CD4-positive, alpha-beta memory T cell (primary cell): ENCODE measurements at regions of chr1 and their contacts with region 1.

Region 1: GRCh38 chr1:172532700-172533509 is at the start of gene SUCO:
- DNase-seq: peak; percentile 99 to 100 (median 100)
- H3K4me3 ChIP-seq: peak within 1 kb of the TSS; percentile 88 to 97
- H3K4me3 Mint-ChIP-seq: peak within 1 kb of the TSS; percentile 93 to 100 (median 97)
- H3K27ac ChIP-seq: peak within 1 kb of the TSS; percentile 99
- H3K27ac Mint-ChIP-seq: peak within 1 kb of the TSS; percentile 97 to 100 (median 100)
- H3K4me1 ChIP-seq: peaks cover 49% of the 10 kb centered on the region
- H3K4me1 Mint-ChIP-seq: peaks cover 37 to 62% (median 46%) of the 10 kb centered on the region in 4 donors
- H3K27me3 ChIP-seq: no peaks in the 10 kb centered on the region
- H3K27me3 Mint-ChIP-seq: peaks cover 0 to 3% of the 10 kb centered on the region in 2 donors
- total RNA-seq, gene SUCO: 71.6 to 74.4 TPM

Region 2: GRCh38 chr1:171741872-171742576 is 790.9 kb before region 1 on chr1 and contains the start of gene VAMP4:
- CTCF ChIA-PET with region 1: interaction called, 3 read pairs
- POLR2A ChIA-PET with region 1: interaction called, 11 read pairs
- intact Hi-C with region 1: loop called (anchors 1 kb)
- DNase-seq: peak; percentile 85 to 90 (median 89)
- H3K4me3 ChIP-seq: peak within 1 kb of the TSS; percentile 84 to 92
- H3K4me3 Mint-ChIP-seq: peak within 1 kb of the TSS; percentile 97 to 100 (median 100)
- H3K27ac ChIP-seq: peak within 1 kb of the TSS; percentile 96
- H3K27ac Mint-ChIP-seq: peak within 1 kb of the TSS; percentile 98 to 100 (median 99)
- H3K4me1 ChIP-seq: peaks cover 44% of the 10 kb centered on the region
- H3K4me1 Mint-ChIP-seq: peaks cover 31 to 62% (median 48%) of the 10 kb centered on the region in 4 donors
- H3K27me3 ChIP-seq: no peaks in the 10 kb centered on the region
- H3K27me3 Mint-ChIP-seq: no peaks in the 10 kb centered on the region
- total RNA-seq, gene VAMP4: 29.4 to 32.0 TPM

Region 3: DNA sequence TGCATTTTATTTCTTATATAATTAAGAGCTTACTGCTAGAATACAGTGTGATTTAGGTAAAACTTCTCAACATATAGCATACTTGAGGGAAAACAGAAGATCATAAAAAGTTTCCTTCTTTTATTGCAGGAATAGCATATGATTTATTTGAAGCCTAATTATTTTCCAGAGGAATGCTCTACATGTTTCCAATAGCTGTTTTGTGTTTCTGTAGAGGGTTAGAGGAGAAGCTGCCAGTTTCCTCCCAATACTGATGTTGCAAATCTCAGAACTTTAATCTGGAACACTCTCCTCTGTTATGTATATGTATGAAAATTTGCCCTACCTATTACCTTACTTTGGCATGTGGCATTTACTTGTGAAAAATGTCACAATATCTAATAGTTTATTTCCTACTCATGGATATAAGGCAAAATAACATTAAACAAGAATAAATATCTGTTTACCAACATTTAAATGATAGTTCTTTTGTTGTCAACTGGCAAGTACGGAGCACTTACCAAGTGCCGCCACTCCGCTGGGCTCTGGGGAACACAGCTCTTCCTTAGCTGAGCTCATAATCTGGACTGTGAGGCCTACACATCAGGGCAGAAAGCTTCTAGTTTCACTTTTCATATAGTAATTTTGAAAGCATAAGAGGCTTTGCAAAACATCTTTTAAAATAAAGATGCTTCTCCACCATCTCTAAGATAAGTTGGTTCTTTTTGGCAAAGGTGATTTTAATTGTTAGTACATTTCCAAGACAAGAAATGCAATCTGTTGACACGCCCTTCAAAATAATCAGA is 352.2 kb before region 1 on chr1:
- CTCF ChIA-PET with region 1: no interaction called
- POLR2A ChIA-PET with region 1: no interaction called
- intact Hi-C with region 1: loop called (anchors 2 kb)
- DNase-seq: peak; percentile 46 to 58 (median 55)
- H3K4me3 ChIP-seq: peak overlapping the region; percentile 23 to 36
- H3K4me3 Mint-ChIP-seq: peak overlapping the region; percentile 75 to 92 (median 86)
- H3K27ac ChIP-seq: peak overlapping the region; percentile 75
- H3K27ac Mint-ChIP-seq: peak overlapping the region; percentile 94 to 99 (median 97)
- H3K4me1 ChIP-seq: peaks cover 44% of the 10 kb centered on the region
- H3K4me1 Mint-ChIP-seq: peaks cover 25 to 61% (median 48%) of the 10 kb centered on the region in 4 donors
- H3K27me3 ChIP-seq: no peaks in the 10 kb centered on the region
- H3K27me3 Mint-ChIP-seq: no peaks in the 10 kb centered on the region

Region 4: DNA sequence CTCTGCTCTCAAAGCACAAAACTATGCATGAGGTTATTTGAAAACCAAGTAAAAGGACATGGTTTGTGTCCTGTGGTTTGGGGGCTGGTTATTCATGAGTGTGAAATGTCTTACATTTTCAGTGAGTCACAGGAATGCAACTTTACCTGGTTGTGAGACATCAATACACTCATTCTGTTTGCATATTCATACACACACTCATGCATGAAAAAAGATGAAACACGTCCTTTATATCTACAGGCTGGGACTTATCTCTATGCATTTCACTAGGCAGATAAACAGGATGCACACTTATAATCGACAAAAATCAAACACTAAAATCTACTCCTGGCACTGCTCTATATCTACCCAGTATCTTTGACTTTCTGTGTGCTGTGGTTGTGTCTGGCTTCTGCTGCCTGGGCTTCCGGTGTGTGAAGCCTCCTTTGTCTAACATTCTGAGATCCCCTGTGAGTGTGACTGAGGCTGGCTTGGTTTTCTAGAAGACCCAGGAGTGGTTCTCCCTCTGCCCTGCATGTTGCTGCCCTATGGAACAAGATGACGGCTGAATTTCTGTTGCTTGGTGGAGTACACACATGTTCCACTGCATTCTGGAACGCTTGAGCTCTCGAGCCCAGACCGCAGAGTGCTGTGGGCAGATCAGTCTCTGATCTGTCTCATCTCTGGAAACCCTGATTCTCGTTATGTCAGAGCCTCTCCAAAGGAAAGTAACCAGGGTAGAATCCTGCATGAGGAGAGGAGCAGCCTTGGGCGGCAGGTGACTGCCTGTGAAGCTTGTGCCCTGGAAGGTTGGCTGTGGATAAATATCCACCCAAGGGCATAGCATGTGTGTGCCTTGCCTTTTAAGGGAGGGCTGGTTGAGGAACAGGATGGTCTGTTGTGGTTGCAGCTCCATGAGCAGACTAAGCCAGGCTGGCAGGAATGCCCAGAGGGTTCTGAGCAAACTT is 106.3 kb after region 1 on chr1:
- CTCF ChIA-PET with region 1: no interaction called
- POLR2A ChIA-PET with region 1: interaction called, 5 read pairs
- intact Hi-C with region 1: loop called (anchors 2 kb)
- DNase-seq: peak; percentile 73 to 89 (median 77)
- H3K4me3 ChIP-seq: peak overlapping the region; percentile 25 to 27
- H3K4me3 Mint-ChIP-seq: peak overlapping the region; percentile 73 to 86 (median 80)
- H3K27ac ChIP-seq: peak overlapping the region; percentile 38
- H3K27ac Mint-ChIP-seq: peak overlapping the region; percentile 82 to 94 (median 90)
- H3K4me1 ChIP-seq: peaks cover 74% of the 10 kb centered on the region
- H3K4me1 Mint-ChIP-seq: peaks cover 62 to 77% (median 72%) of the 10 kb centered on the region in 4 donors
- H3K27me3 ChIP-seq: no peaks in the 10 kb centered on the region
- H3K27me3 Mint-ChIP-seq: no peaks in the 10 kb centered on the region

Region 5: GRCh38 chr1:173714759-173715537 is 1182.0 kb after region 1 on chr1 and contains the start of gene KLHL20:
- CTCF ChIA-PET with region 1: no interaction called
- POLR2A ChIA-PET with region 1: no interaction called
- intact Hi-C with region 1: loop called (anchors 2 kb)
- DNase-seq: peak; percentile 89 to 93 (median 91)
- H3K4me3 ChIP-seq: peak within 1 kb of the TSS; percentile 47 to 73
- H3K4me3 Mint-ChIP-seq: peak within 1 kb of the TSS; percentile 95 to 100 (median 97)
- H3K27ac ChIP-seq: peak within 1 kb of the TSS; percentile 78
- H3K27ac Mint-ChIP-seq: peak within 1 kb of the TSS; percentile 92 to 98 (median 97)
- H3K4me1 ChIP-seq: peaks cover 34% of the 10 kb centered on the region
- H3K4me1 Mint-ChIP-seq: peaks cover 18 to 33% (median 25%) of the 10 kb centered on the region in 4 donors
- H3K27me3 ChIP-seq: peaks cover 5% of the 10 kb centered on the region
- H3K27me3 Mint-ChIP-seq: peaks cover 14 to 15% of the 10 kb centered on the region in 2 donors
- total RNA-seq, gene KLHL20: 41.0 to 43.9 TPM

Region 6: DNA sequence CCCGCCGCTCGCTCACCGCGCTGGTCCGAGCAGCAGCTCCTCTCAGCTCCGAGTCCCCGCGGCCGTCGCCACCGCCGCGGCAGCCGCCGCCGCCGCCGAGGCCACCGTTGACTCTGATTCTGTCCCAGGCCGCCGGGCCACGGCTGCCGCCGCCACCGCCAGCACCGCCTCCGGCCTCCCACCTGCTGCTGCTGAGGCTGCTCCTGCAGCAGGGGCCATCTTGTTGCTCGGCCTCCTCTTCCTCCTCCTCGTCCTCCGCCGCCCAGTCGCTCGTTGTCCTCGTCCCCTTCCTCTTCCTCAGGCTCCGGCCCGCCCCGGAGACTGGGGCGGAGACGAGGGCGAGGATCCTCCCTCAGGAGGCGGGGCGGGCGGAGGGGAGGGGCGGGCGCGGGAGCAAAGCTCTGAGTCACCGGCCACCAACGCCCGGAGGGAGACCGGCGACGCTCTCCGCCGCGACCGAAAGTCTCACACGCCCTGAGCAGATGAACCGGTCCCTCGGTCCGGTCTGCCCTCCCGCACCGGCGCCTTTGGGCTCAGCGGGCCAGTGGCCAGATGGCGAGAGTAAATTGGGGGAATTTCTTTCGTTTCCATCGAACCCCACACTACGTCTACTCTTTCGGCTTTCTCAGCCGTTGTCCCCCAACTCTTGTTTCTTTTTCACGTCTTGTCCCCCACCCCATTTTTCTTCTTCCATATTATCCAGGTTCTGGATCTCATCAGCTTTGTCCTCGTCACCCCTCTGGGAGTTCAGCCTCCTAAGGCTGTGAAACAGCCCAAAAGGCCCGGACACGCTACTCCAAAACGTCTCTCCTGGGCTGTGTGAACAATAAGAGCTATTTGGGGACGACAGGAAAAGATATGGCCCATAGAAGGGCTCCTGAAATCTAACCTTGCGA is 1489.4 kb after region 1 on chr1 and contains the start of gene RC3H1:
- CTCF ChIA-PET with region 1: no interaction called
- POLR2A ChIA-PET with region 1: interaction called, 5 read pairs
- intact Hi-C with region 1: loop called (anchors 2 kb)
- DNase-seq: peak; percentile 84 to 91 (median 85)
- H3K4me3 ChIP-seq: peak within 1 kb of the TSS; percentile 65 to 100
- H3K4me3 Mint-ChIP-seq: peak within 1 kb of the TSS; percentile 98 to 100 (median 98)
- H3K27ac ChIP-seq: peak within 1 kb of the TSS; percentile 80
- H3K27ac Mint-ChIP-seq: peak within 1 kb of the TSS; percentile 98 to 99 (median 99)
- H3K4me1 ChIP-seq: peaks cover 41% of the 10 kb centered on the region
- H3K4me1 Mint-ChIP-seq: peaks cover 30 to 60% (median 39%) of the 10 kb centered on the region in 4 donors
- H3K27me3 ChIP-seq: no peaks in the 10 kb centered on the region
- H3K27me3 Mint-ChIP-seq: no peaks in the 10 kb centered on the region
- total RNA-seq, gene RC3H1: 49.2 TPM